Lower lobe of right lung (tissue), 2 donors: ENCODE measurements at regions of chr15 and their contacts with region 1.

Region 1: DNA sequence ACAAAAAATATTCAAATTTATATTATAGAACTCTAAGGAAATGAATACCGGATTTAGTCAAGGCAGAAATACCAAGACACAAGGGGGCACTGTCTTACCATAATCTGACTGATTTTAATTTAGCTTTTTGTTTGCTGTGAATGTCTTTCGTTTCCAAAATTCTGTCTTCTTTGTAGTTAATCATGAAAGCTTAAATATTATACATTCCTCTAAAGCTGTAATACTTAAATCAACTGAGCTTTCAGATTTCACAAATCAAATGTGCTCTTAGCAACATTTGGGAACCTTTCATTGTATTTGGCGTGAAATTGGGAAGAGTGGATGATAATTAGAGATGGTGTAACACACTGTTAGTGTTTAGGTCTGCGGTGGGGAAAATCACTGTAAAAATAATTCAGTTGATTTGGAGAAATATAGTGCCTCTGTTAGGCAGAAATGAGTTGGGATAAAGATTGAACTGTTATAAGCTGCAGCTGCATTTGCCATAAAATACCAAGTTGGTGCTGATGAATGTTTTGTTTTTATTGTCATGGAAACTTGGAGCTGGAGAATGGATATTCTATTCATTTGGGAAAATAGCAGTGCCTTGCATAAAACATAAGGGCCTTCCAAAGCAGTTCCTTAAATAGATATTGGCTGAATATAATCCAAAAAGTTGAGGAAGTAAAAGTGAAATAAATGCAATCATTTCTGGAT is 228.2 kb downstream of the TCF12 start:
- DNase-seq: no peak
- ATAC-seq: peak in 1 of 2 donors; percentile 66
- H3K4me3 ChIP-seq: peak overlapping the region; percentile 18
- H3K27ac ChIP-seq: peak overlapping the region; percentile 33
- H3K4me1 ChIP-seq: peaks cover 37% of the 10 kb centered on the region
- H3K27me3 ChIP-seq: no peaks in the 10 kb centered on the region
- CTCF ChIP-seq: peak; percentile 73

Region 2: GRCh38 chr15:56365075-56365711 is 781.5 kb before region 1 on chr15 and contains the start of gene TEX9:
- intact Hi-C with region 1: no loop called
- DNase-seq: peak; percentile 90
- ATAC-seq: peak; percentile 98 to 99
- H3K4me3 ChIP-seq: peak within 1 kb of the TSS; percentile 64
- H3K27ac ChIP-seq: no peak within 1 kb of the TSS
- H3K4me1 ChIP-seq: peaks cover 7% of the 10 kb centered on the region
- H3K27me3 ChIP-seq: no peaks in the 10 kb centered on the region
- CTCF ChIP-seq: no peak
- total RNA-seq, gene TEX9: 11.6 TPM

Region 3: GRCh38 chr15:57213862-57214261 is 67.2 kb after region 1 on chr15:
- intact Hi-C with region 1: loop called (anchors 5 kb)
- DNase-seq: no peak
- ATAC-seq: peak; percentile 78 to 86
- H3K4me3 ChIP-seq: no peak overlapping the region
- H3K27ac ChIP-seq: no peak overlapping the region
- H3K4me1 ChIP-seq: peaks cover 30% of the 10 kb centered on the region
- H3K27me3 ChIP-seq: no peaks in the 10 kb centered on the region
- CTCF ChIP-seq: peak; percentile 47

Region 4: DNA sequence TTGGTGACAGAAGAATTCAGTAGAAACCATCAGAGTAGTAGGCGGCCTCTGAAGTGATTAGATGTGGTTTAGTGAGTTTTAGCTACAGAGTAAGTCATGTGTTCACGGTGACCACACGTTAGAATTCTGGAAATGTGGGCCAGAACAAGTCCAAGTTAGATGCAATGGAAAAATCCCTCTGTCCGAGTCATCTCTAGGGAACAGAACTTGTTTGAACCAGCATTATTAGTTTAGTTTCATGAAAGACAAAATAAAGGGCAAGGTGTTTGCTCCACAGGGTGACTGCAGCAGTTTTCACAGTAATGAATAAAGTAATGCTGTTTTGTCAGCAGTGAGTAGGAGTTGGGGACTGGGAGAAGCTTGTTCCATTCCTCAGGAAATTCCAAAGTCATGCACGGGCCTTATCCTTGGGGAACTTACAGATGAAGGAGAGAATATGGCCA is 329.9 kb after region 1 on chr15:
- intact Hi-C with region 1: no loop called
- DNase-seq: no peak
- ATAC-seq: peak in 1 of 2 donors; percentile 61
- H3K4me3 ChIP-seq: no peak overlapping the region
- H3K27ac ChIP-seq: no peak overlapping the region
- H3K4me1 ChIP-seq: peaks cover 8% of the 10 kb centered on the region
- H3K27me3 ChIP-seq: no peaks in the 10 kb centered on the region
- CTCF ChIP-seq: no peak